ENCODE measurements at regions of chr12 and their contacts with region 1.

Region 1: GRCh38 chr12:22459838-22460490 is 84.4 kb downstream of the C2CD5 start:
- DNase-seq: peak; percentile 7
- CTCF ChIP-seq: peak; percentile 57

Region 2: GRCh38 chr12:21476949-21477348 is 983.0 kb before region 1 on chr12:
- in situ Hi-C with region 1: loop called (anchors 25 kb)
- DNase-seq: no peak
- CTCF ChIP-seq: no peak

Region 3: DNA sequence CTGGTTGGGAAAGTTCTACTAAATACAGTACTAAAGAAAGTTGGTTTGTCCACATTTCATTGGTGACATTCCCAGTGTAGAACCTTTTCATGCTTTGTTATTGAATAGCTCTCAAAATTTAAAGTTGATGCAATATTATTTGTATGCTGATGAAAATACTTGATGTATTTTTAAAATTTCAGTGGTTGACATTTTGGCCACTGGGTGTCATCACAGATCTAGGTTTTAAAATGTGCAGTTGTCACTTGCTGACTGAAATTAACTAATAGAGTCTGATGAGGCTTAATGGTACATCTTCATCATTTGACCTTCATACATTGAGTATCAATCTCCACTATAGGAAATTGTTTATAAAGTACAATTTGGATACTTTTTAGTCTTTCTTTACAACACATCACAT is 376.8 kb before region 1 on chr12:
- in situ Hi-C with region 1: loop called (anchors 25 kb)
- DNase-seq: peak; percentile 31
- CTCF ChIP-seq: peak; percentile 39

Measured in GM13977 (cell line).